ENCODE measurements at regions of chr18 and their contacts with region 1.

Region 1: GRCh38 chr18:26771524-26771923 is 94.0 kb downstream of the AQP4 start:
- DNase-seq: no peak
- H3K4me3 ChIP-seq: no peak overlapping the region
- H3K27ac ChIP-seq: no peak overlapping the region
- H3K27me3 ChIP-seq: no peaks in the 10 kb centered on the region
- CTCF ChIP-seq: peak in 38 of 56 donors; percentile 10 to 50 (median 28)

Region 2: DNA sequence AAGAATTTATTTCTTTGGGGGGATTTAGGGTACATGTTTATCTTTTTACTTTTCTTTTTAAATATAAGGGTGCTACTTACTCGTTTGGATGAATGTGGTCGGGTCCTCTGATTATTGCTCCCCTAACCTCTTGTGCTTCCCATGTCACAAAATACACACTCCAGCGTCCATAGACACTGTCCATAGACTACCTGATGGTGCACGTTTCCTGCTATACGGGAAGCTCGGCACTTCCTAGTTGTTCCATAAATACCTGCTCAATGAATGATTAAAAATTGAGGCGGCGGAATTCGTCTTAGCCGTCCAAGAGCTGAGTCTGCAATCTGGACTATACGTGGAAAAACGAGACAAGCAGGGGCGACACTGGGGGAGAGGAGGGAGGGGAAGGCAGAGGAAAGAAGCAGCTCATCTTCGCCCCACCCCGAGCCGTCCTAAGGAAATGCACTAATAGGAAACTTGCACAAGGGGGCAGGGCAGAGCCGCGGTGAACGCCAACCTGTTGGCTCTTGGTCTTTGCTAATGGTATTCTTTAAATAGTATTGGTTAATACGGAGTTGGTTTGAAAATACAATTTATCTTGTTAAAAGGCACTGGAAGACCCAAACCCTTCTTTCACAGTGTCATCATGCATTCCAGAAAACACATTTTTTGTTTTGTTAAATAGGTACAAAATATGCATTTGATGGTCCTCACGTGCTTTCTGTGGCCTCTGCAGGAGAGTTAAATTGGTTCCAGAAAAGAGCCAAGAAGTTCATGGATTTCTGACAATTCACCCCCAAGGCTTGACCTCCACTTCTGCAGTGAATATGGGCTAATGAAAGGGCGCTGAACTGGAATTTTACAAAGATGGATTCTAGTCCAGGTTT is 150.1 kb before region 1 on chr18:
- intact Hi-C with region 1: loop called in 1 of 2 experiments (anchors 10 kb)
- DNase-seq: peak in 5 of 10 donors; percentile 39 to 67 (median 57)
- H3K4me3 ChIP-seq: no peak overlapping the region
- H3K27ac ChIP-seq: peak overlapping the region in 1 of 59 donors; percentile 33
- H3K27me3 ChIP-seq: no peaks in the 10 kb centered on the region
- CTCF ChIP-seq: peak; percentile 14 to 84 (median 65)

Region 3: DNA sequence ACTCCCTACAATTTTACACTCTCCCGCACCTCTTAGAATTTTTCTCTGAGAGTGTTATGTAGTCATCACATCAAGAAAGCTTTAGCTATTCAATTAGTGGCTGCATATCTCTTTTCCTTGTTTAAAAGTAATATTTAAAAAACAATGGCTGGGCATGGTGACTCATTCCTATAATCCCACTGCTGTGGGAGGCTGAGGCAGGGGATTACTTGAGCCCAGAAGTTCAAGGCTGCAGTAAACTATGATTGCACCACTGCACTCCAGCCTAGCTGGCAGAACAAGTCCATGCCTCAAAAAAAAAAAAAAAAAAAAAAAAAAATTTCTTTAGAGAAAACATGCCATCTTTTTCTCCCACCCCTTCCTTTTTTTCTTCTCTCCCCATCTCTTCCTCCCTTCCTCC is 49.7 kb after region 1 on chr18:
- intact Hi-C with region 1: no loop called
- DNase-seq: no peak
- H3K4me3 ChIP-seq: no peak overlapping the region
- H3K27ac ChIP-seq: no peak overlapping the region
- H3K27me3 ChIP-seq: no peaks in the 10 kb centered on the region
- CTCF ChIP-seq: no peak

Measured in dorsolateral prefrontal cortex (tissue), 120 donors.